OCI-LY7 (cell line): ENCODE measurements at regions of chr2 and their contacts with region 1.

Region 1: DNA sequence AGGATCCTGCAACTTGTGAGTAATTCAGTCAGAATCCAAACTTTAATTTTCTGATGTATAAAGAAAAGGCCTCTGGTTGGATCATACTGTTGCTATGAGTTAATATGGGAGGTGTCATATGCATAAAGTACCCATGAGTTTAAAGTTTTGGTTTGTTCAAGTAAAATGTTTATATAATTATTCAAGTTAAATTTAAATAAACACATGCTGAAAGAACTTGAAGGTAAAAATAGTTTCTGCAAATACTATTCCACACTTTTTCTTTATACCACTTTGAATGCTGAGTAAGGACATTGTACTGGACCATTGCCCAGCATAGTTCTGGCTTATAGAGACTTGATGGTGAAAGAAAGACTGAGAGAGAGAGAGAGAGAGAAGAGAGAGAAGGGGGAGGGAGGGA is 30.7 kb downstream of the PKP4 start:
- DNase-seq: no peak
- H3K4me3 ChIP-seq: no peak overlapping the region
- H3K27ac ChIP-seq: no peak overlapping the region
- H3K4me1 ChIP-seq: peaks cover 18% of the 10 kb centered on the region
- CTCF ChIP-seq: no peak

Region 2: GRCh38 chr2:158047156-158047611 is 440.2 kb before region 1 on chr2:
- CTCF ChIA-PET with region 1: no interaction called
- POLR2A ChIA-PET with region 1: no interaction called
- intact Hi-C with region 1: no loop called
- DNase-seq: no peak
- H3K4me3 ChIP-seq: no peak overlapping the region
- H3K27ac ChIP-seq: no peak overlapping the region
- H3K4me1 ChIP-seq: no peaks in the 10 kb centered on the region
- CTCF ChIP-seq: no peak

Region 3: DNA sequence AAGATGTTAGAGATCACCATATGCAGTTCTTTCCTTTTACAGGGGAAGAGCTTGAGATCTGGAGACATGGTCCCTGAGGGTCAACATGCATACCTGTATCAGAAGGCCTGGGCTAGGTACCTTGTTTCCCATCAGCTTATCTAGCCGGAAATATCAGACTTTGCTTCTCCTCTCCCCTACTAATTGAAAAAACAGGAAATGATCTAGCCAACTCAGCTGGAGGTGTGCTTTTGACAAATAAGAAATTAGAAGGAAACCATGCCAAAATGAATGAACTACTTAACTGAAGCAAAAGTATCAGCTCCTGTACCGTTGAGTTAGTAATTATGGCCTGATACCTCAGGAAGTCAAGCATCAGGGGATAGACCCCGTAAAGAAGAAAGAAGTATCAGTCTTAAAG is 10.2 kb before region 1 on chr2:
- CTCF ChIA-PET with region 1: no interaction called
- POLR2A ChIA-PET with region 1: interaction called, 21 read pairs
- intact Hi-C with region 1: no loop called
- DNase-seq: peak; percentile 2
- H3K4me3 ChIP-seq: no peak overlapping the region
- H3K27ac ChIP-seq: no peak overlapping the region
- H3K4me1 ChIP-seq: peaks cover 4% of the 10 kb centered on the region
- CTCF ChIP-seq: no peak

Region 4: GRCh38 chr2:159157361-159158209 is 670.2 kb after region 1 on chr2:
- CTCF ChIA-PET with region 1: no interaction called
- POLR2A ChIA-PET with region 1: no interaction called
- intact Hi-C with region 1: no loop called
- DNase-seq: no peak
- H3K4me3 ChIP-seq: no peak overlapping the region
- H3K27ac ChIP-seq: no peak overlapping the region
- H3K4me1 ChIP-seq: no peaks in the 10 kb centered on the region
- CTCF ChIP-seq: no peak